Dendritic cell treated with granulocyte-macrophage colony-stimulating factor and Interleukin-4, amounts not matched to agents 40 ng/mL and 50 ng/mL, for 4 days (primary cell): ENCODE measurements at regions of chr2 and their contacts with region 1.

Region 1: GRCh38 chr2:224650815-224651439 is 65.2 kb downstream of the CCDC195 start:
- H3K4me3 Mint-ChIP-seq: no peak overlapping the region
- H3K27ac Mint-ChIP-seq: no peak overlapping the region
- H3K4me1 Mint-ChIP-seq: no peaks in the 10 kb centered on the region
- H3K27me3 Mint-ChIP-seq: no peaks in the 10 kb centered on the region

Region 2: GRCh38 chr2:223247136-223247535 is 1403.8 kb before region 1 on chr2:
- intact Hi-C with region 1: no loop called
- H3K4me3 Mint-ChIP-seq: no peak overlapping the region
- H3K27ac Mint-ChIP-seq: no peak overlapping the region
- H3K4me1 Mint-ChIP-seq: no peaks in the 10 kb centered on the region
- H3K27me3 Mint-ChIP-seq: no peaks in the 10 kb centered on the region

Region 3: GRCh38 chr2:224449212-224450147 is 201.4 kb before region 1 on chr2:
- intact Hi-C with region 1: loop called (anchors 5 kb)
- H3K4me3 Mint-ChIP-seq: no peak overlapping the region
- H3K27ac Mint-ChIP-seq: no peak overlapping the region
- H3K4me1 Mint-ChIP-seq: no peaks in the 10 kb centered on the region
- H3K27me3 Mint-ChIP-seq: peaks cover under 1% of the 10 kb centered on the region

Region 4: DNA sequence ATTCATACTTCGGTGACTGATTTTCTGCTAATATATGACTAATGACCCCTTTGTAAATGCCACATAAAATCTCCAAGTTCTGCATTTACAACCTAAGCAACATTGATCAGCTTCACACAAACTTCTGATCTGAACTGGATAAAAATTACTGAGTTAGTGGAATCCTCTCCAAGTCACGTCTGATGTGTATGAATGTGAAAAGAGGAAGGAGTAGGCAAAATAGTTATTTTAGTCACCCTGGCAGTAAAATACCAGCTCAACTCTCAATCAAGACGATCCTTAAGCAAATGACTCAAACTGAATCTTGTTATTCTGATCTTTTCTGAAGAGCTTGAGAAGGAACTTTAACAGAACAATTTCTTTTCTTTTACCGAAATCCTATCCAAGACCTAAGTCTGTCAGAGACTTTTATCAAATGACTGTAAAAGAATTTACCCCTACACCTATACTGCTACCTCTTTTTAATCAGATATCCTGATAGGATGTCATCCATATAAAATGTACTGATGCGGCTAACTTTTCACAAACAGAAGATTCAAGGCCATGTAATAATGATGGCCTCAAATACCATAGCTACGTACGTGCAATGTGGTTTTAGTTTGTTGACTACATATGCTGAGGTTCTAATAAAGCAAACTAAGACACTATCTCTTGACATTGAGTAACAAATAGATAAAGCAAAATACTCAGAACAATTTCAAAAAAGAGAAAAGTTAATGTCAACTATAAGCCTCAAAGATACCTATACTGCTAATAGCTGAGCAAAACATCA is 89.5 kb before region 1 on chr2:
- intact Hi-C with region 1: no loop called
- H3K4me3 Mint-ChIP-seq: no peak overlapping the region
- H3K27ac Mint-ChIP-seq: no peak overlapping the region
- H3K4me1 Mint-ChIP-seq: peaks cover 35% of the 10 kb centered on the region
- H3K27me3 Mint-ChIP-seq: no peaks in the 10 kb centered on the region